Calu3 (cell line): ENCODE measurements at regions of chr18 and their contacts with region 1.

Region 1: GRCh38 chr18:24726727-24727492 is 266.5 kb downstream of the HRH4 start:
- DNase-seq: peak; percentile 73
- H3K4me3 Mint-ChIP-seq: no peak overlapping the region
- H3K27ac Mint-ChIP-seq: no peak overlapping the region
- H3K4me1 Mint-ChIP-seq: no peaks in the 10 kb centered on the region
- H3K27me3 Mint-ChIP-seq: peaks cover 45% of the 10 kb centered on the region
- CTCF ChIP-seq: peak; percentile 73

Region 2: GRCh38 chr18:24362758-24363157 is 364.2 kb before region 1 on chr18:
- CTCF ChIA-PET with region 1: no interaction called
- intact Hi-C with region 1: loop called (anchors 5 kb)
- DNase-seq: peak; percentile 45
- H3K4me3 Mint-ChIP-seq: no peak overlapping the region
- H3K27ac Mint-ChIP-seq: no peak overlapping the region
- H3K4me1 Mint-ChIP-seq: peaks cover 6% of the 10 kb centered on the region
- H3K27me3 Mint-ChIP-seq: no peaks in the 10 kb centered on the region
- CTCF ChIP-seq: no peak

Region 3: GRCh38 chr18:24543805-24544498 is 183.0 kb before region 1 on chr18:
- CTCF ChIA-PET with region 1: interaction called, 14 read pairs
- intact Hi-C with region 1: loop called (anchors 1 kb)
- DNase-seq: peak; percentile 35
- H3K4me3 Mint-ChIP-seq: no peak overlapping the region
- H3K27ac Mint-ChIP-seq: no peak overlapping the region
- H3K4me1 Mint-ChIP-seq: no peaks in the 10 kb centered on the region
- H3K27me3 Mint-ChIP-seq: peaks cover 52% of the 10 kb centered on the region
- CTCF ChIP-seq: peak; percentile 42

Region 4: DNA sequence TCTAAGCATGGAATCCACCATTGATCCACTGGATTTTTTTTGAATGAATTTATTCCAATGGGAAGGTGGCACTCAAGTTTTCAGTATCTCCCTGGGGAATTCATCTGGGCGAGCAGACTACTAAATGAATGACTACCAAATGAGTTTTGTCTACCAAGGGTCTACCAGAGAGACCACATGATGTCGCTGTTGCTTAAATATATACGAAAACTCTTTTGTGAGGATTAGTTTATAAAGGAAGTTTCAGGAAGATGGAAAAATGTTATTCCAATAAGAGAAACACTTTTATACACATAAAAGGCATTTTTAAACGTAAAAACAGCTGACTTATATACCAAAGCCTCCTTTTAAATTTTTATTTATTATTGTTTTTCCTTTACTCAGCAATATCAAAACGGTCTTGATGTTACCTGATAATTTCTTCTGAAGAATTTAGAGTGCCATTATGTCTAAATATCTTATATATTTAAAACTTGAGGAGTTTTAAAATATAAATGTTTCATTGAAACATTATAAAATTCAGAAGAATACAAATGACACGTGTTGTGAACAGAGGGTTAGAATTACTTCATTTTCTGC is 126.7 kb before region 1 on chr18:
- CTCF ChIA-PET with region 1: interaction called, 4 read pairs
- intact Hi-C with region 1: loop called (anchors 1 kb)
- DNase-seq: peak; percentile 22
- H3K4me3 Mint-ChIP-seq: no peak overlapping the region
- H3K27ac Mint-ChIP-seq: no peak overlapping the region
- H3K4me1 Mint-ChIP-seq: no peaks in the 10 kb centered on the region
- H3K27me3 Mint-ChIP-seq: peaks cover 92% of the 10 kb centered on the region
- CTCF ChIP-seq: peak; percentile 39

Region 5: DNA sequence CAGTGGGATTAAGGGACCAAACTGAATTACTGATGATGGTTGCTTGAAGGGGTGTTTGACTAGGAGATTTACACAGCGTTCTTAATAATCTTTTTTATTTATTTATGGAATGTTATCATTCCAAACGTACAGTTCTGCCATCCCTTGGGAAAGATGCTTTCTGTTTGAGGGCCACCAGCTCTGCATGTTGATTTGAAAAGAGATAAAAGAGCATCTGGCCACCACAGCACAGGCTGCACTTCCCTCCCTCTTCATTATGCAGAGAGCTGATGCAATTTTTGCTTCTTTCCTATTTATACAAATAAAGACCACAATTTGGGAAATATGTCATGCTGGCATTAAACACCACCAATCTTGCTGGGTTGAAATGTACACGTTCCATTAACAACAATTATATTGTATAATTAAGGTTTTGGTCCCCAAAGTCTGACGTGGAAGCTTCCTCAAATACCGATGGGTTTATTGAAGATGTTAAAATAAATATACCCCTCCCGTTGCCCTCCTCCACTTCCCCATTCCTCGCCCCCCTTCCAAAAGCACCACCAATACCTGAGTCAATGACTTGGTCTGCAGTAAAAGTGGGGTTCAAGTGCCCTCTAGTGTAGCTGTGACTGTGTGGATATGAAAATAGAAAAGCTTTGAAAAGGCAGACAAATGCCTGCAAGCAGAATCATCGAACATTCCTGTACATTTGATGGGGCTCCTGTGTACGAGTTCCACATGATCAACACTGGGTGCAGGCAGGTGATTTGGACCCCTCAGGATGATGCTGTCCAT is 54.6 kb before region 1 on chr18:
- CTCF ChIA-PET with region 1: no interaction called
- intact Hi-C with region 1: loop called (anchors 10 kb)
- DNase-seq: no peak
- H3K4me3 Mint-ChIP-seq: no peak overlapping the region
- H3K27ac Mint-ChIP-seq: no peak overlapping the region
- H3K4me1 Mint-ChIP-seq: no peaks in the 10 kb centered on the region
- H3K27me3 Mint-ChIP-seq: peaks cover 98% of the 10 kb centered on the region
- CTCF ChIP-seq: no peak

Region 6: DNA sequence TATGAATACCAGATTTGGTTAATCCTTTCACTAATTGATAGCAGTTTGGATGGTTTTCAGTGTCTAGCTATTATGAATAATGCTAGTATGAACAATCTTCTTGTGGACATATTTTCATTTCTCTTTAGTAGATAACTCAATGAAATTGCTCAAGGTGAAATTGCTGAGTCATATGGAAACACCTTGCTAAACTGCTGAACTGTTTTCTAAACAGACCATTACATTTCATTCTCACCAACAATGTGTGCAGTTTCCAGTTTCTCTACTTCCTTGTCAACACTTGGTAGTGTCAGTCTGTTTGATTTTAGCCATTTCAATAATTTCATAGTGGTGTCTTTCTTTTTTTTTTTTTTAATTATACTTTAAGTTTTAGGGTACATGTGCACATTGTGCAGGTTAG is 16.4 kb before region 1 on chr18:
- CTCF ChIA-PET with region 1: no interaction called
- intact Hi-C with region 1: no loop called
- DNase-seq: no peak
- H3K4me3 Mint-ChIP-seq: no peak overlapping the region
- H3K27ac Mint-ChIP-seq: no peak overlapping the region
- H3K4me1 Mint-ChIP-seq: peaks cover under 1% of the 10 kb centered on the region
- H3K27me3 Mint-ChIP-seq: no peaks in the 10 kb centered on the region
- CTCF ChIP-seq: no peak